ENCODE measurements at regions of chr10 and their contacts with region 1.

Region 1: DNA sequence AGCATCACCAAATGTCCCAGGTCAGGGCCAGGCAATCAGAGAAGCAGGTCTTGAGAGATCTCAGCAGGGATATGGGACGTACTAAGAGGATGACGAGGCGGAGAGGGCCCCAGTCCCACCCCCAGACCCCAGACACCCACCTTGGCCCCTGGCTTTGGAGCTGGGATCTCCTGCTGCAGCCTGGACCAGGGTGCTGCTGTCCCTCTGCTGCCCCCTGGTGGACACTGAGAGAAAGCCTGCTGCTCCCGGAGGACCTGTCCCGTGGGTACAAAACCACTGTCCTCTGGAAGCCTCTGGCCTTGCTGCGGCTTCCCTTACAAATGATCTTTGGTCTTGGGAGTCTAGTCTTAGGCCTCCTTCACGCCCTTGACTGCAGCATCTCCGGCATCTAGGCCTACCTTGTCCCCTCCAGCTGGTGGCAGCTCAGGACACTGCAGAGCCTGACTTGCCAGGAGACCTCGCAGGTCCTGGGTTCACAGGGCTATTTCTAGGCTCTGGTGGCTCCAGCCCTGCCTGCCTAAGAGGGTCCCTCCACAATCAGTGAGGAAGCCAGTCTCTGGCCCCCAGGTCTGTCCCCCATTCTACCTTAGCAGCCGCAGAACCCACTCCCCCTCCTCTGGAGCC is 97.1 kb downstream of the RGS10 start:
- DNase-seq: peak; percentile 86 to 88 (median 88)
- ATAC-seq: peak; percentile 69
- H3K4me3 ChIP-seq: no peak overlapping the region
- H3K27ac ChIP-seq: no peak overlapping the region
- H3K4me1 ChIP-seq: no peaks in the 10 kb centered on the region
- H3K27me3 ChIP-seq: no peaks in the 10 kb centered on the region
- CTCF ChIP-seq: peak; percentile 78 to 98 (median 81)
- POLR2A ChIP-seq: no peak

Region 2: DNA sequence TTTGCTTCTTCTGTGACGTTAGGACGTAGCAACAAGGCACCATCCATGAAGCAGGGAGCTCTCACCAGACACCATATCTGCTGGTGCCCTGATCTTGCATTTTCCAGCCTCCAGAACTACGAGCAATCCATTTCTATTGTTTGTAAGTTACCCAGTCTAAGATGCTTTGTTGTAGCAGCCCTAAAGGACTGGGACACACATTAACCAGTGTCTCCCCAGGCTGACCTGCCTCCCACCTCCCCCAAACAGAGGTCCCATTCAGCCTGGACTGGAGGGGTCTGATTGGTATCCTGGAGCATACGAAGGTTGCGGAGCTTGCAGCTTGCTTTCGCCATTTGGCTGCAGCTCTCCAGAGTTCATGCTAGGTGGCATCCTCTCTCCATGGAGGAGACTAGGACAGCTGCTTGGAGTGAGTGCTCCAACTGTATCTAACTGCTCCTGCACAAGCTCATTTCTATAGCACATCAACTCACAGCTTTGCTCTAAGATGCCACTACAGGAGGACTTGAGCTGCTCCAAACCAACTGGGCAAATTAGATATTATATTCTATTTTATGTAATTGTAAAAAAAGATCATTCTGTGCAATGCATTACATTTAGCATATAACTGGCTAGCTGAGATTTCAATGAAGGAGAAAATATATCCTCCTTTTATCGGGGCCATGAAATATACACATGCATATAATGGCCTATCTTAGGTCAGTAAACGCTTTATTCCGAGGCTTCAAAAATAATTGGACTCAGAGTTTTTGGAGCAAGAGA is 246.0 kb before region 1 on chr10:
- intact Hi-C with region 1: loop called (anchors 5 kb)
- DNase-seq: peak; percentile 64 to 79 (median 74)
- ATAC-seq: peak; percentile 93
- H3K4me3 ChIP-seq: no peak overlapping the region
- H3K27ac ChIP-seq: no peak overlapping the region
- H3K4me1 ChIP-seq: no peaks in the 10 kb centered on the region
- H3K27me3 ChIP-seq: no peaks in the 10 kb centered on the region
- CTCF ChIP-seq: peak; percentile 61 to 86 (median 78)
- POLR2A ChIP-seq: no peak

Region 3: GRCh38 chr10:119246862-119247549 is 198.4 kb before region 1 on chr10:
- intact Hi-C with region 1: no loop called
- DNase-seq: no peak
- ATAC-seq: no peak
- H3K4me3 ChIP-seq: no peak overlapping the region
- H3K27ac ChIP-seq: no peak overlapping the region
- H3K4me1 ChIP-seq: peaks cover 6% of the 10 kb centered on the region
- H3K27me3 ChIP-seq: no peaks in the 10 kb centered on the region
- CTCF ChIP-seq: no peak
- POLR2A ChIP-seq: no peak

Region 4: DNA sequence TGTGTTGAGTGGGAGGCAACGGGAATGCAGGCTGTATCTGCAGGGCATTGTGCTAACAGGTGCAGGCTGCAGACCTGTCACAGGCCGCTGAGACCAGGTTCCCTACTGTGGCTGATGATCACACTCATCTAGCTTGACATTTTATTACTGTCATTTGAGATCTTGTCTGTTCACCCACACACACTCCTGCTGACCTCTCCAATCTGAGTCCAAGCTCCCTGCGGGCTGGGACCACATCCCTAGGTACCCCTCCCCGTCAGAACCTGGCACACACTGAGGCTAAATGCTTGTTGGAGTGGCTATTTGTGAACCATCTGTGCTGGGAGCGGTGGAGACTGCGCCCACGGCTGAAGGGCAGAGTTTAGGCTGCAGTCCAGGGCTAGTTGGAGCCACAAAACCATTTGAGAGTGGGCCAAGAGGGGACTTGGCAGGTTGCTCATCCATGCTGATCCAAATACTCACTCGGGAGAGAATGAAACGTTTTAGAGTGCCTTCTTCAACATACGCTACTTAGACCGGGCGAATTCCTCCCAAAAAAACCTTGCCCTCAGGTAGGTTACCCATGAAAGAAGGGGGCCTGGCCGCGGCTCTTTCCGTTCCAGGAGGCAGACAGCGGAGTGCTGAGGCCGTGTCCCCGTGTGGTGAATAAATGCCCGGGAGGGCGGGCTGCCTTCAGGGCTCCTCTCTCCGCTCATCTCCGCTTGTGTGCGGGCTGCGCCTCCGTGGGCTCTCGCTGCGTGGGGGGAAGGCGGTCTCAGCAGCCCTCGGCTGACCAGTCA is 67.3 kb before region 1 on chr10:
- intact Hi-C with region 1: no loop called
- DNase-seq: no peak
- ATAC-seq: no peak
- H3K4me3 ChIP-seq: no peak overlapping the region
- H3K27ac ChIP-seq: no peak overlapping the region
- H3K4me1 ChIP-seq: no peaks in the 10 kb centered on the region
- H3K27me3 ChIP-seq: no peaks in the 10 kb centered on the region
- CTCF ChIP-seq: no peak
- POLR2A ChIP-seq: no peak

Region 5: GRCh38 chr10:119957451-119957850 is 512.0 kb after region 1 on chr10:
- intact Hi-C with region 1: no loop called
- DNase-seq: no peak
- ATAC-seq: no peak
- H3K4me3 ChIP-seq: no peak overlapping the region
- H3K27ac ChIP-seq: no peak overlapping the region
- H3K4me1 ChIP-seq: no peaks in the 10 kb centered on the region
- H3K27me3 ChIP-seq: no peaks in the 10 kb centered on the region
- CTCF ChIP-seq: no peak
- POLR2A ChIP-seq: no peak